Activated B cell treated with CpG ODN at 0.5 μM for 24 hours (primary cell): ENCODE measurements at regions of chr4 and their contacts with region 1.

Region 1: GRCh38 chr4:85474818-85475630 is at the start of gene ARHGAP24:
- DNase-seq: peak; percentile 79
- ATAC-seq: peak; percentile 89
- H3K4me3 Mint-ChIP-seq: peak within 1 kb of the TSS; percentile 99
- H3K27ac Mint-ChIP-seq: peak within 1 kb of the TSS; percentile 99
- H3K4me1 Mint-ChIP-seq: peaks cover 52% of the 10 kb centered on the region
- H3K27me3 Mint-ChIP-seq: no peaks in the 10 kb centered on the region
- CTCF ChIP-seq: no peak
- total RNA-seq, gene ARHGAP24: 155 and 231 TPM in 2 replicates

Region 2: DNA sequence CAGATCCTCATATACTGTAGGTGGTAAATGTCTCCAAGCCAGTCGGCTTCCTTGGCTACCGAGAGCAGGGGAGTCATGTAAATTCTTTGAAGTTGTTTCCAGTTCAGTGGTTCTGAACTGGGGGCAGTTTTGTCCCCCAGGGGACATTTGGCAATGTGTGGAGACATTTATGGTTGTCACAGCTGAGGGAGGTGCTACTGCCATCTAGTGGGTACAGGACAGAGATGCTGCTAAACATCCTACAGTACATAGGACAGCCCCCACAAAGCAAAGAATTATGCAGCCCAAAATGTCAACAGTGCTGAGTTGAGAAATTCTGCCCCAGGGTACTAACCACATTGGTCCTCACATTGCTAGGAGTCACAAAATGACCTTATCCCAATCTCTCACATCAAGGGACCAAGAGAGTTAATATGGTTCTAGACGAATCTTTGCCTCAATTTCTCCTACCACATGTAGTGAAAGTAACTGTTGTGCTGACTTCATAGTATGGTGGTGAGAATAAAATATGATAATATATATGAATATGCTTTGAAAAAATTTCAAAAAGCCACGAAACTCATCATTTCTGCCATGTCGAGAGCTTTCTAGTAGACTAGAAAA is 104.5 kb before region 1 on chr4:
- CTCF ChIA-PET with region 1: no interaction called
- POLR2A ChIA-PET with region 1: no interaction called
- intact Hi-C with region 1: loop called (anchors 1 kb)
- DNase-seq: peak; percentile 23
- ATAC-seq: peak; percentile 94
- H3K4me3 Mint-ChIP-seq: peak overlapping the region; percentile 33
- H3K27ac Mint-ChIP-seq: peak overlapping the region; percentile 50
- H3K4me1 Mint-ChIP-seq: peaks cover 29% of the 10 kb centered on the region
- H3K27me3 Mint-ChIP-seq: no peaks in the 10 kb centered on the region
- CTCF ChIP-seq: no peak

Region 3: DNA sequence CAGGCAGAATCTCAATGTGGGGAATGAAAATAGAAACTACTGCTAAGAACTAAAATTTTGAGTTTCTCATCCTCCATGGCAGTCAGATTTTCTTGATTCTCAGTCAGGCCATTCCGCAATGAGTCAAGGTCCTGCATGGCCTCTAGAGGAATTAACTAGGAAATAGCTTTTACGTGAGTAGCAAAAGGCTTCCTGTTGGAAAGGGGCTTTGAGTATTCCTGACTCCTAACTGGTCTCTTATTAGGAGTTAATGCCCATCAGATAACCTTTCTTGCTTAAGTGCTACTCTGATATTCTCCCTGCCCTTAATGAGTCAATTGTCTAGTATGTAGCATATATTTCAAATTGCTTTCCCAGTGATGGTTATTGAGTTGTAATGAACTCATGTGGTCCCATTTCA is 65.8 kb before region 1 on chr4:
- CTCF ChIA-PET with region 1: no interaction called
- POLR2A ChIA-PET with region 1: no interaction called
- intact Hi-C with region 1: no loop called
- DNase-seq: no peak
- ATAC-seq: no peak
- H3K4me3 Mint-ChIP-seq: no peak overlapping the region
- H3K27ac Mint-ChIP-seq: no peak overlapping the region
- H3K4me1 Mint-ChIP-seq: no peaks in the 10 kb centered on the region
- H3K27me3 Mint-ChIP-seq: no peaks in the 10 kb centered on the region
- CTCF ChIP-seq: no peak

Region 4: GRCh38 chr4:85457752-85458467 is 17.1 kb before region 1 on chr4:
- CTCF ChIA-PET with region 1: no interaction called
- POLR2A ChIA-PET with region 1: interaction called, 3 read pairs
- intact Hi-C with region 1: loop called (anchors 2 kb)
- DNase-seq: no peak
- ATAC-seq: no peak
- H3K4me3 Mint-ChIP-seq: no peak overlapping the region
- H3K27ac Mint-ChIP-seq: no peak overlapping the region
- H3K4me1 Mint-ChIP-seq: peaks cover 16% of the 10 kb centered on the region
- H3K27me3 Mint-ChIP-seq: no peaks in the 10 kb centered on the region
- CTCF ChIP-seq: no peak

Region 5: GRCh38 chr4:85514117-85514516 is 39.1 kb after region 1 on chr4:
- CTCF ChIA-PET with region 1: no interaction called
- POLR2A ChIA-PET with region 1: no interaction called
- intact Hi-C with region 1: loop called (anchors 5 kb)
- DNase-seq: no peak
- ATAC-seq: peak; percentile 21
- H3K4me3 Mint-ChIP-seq: no peak overlapping the region
- H3K27ac Mint-ChIP-seq: no peak overlapping the region
- H3K4me1 Mint-ChIP-seq: peaks cover 36% of the 10 kb centered on the region
- H3K27me3 Mint-ChIP-seq: no peaks in the 10 kb centered on the region
- CTCF ChIP-seq: no peak

Region 6: DNA sequence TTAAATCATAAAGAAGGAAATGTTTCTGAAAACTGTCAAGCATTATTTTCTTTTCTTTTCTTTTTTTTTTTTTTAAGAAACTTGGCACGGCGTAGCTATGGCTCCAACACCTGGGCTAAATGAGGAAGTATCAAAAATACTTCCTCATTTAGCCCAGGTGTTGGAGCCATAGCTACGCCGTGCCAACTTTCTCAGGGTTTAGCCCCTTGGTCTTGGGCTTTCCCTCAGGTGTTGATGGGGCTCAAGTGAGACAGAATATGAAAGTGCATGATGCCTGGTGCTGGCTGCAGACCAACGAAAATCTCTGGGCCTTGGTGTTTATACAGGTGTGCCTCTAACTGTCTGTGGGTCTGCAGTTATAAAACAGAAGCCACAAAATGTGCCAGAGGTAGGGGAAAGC is 132.6 kb after region 1 on chr4:
- CTCF ChIA-PET with region 1: interaction called, 4 read pairs
- POLR2A ChIA-PET with region 1: interaction called, 6 read pairs
- intact Hi-C with region 1: loop called (anchors 5 kb)
- DNase-seq: no peak
- ATAC-seq: peak; percentile 90
- H3K4me3 Mint-ChIP-seq: peak overlapping the region; percentile 70
- H3K27ac Mint-ChIP-seq: peak overlapping the region; percentile 92
- H3K4me1 Mint-ChIP-seq: peaks cover 50% of the 10 kb centered on the region
- H3K27me3 Mint-ChIP-seq: no peaks in the 10 kb centered on the region
- CTCF ChIP-seq: no peak